ENCODE measurements at regions of chr5 and their contacts with region 1.

Region 1: DNA sequence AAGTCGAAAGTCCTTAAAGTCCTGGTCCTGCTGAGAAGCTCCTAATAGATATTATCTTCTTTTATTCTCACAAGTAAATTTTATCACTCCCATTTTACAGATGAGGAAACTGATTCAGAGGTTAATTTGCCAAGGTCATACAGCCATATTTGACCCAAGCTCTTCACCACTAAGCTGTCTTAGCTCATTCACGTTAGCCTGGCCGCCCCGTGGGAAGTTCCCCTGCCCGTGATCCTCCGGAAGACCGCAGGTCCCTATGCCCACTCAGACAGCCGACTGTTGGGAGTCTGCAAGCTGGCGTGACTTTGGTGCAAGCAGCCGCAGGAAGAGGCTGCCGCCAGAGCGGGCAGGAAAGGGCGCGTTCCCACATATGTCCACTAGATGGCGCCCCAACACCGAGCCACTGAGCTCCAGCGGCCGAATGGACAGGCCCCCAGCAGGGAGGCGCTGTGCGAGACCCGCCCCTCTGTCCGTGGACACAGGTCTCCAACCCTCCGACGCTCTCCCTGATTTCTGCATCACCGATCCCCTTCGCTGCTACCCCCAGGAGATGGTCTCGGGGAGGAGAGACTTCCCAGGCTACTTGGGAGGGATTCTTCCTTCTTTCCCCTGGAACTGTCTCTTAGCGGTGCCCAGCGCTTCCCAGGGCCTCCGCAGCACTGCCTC is 10.0 kb upstream of the ARAP3 start:
- DNase-seq: peak; percentile 86 to 91 (median 87)
- ATAC-seq: peak; percentile 98 to 100 (median 100)
- H3K4me3 ChIP-seq: peak overlapping the region; percentile 5 to 26 (median 25)
- H3K27ac ChIP-seq: no peak overlapping the region
- H3K4me1 ChIP-seq: peaks cover 0 to 8% (median 0%) of the 10 kb centered on the region in 4 donors
- H3K27me3 ChIP-seq: no peaks in the 10 kb centered on the region
- CTCF ChIP-seq: peak; percentile 98 to 100 (median 99)
- POLR2A ChIP-seq: no peak

Region 2: GRCh38 chr5:141623186-141623585 is 68.8 kb before region 1 on chr5:
- intact Hi-C with region 1: no loop called
- DNase-seq: no peak
- ATAC-seq: no peak
- H3K4me3 ChIP-seq: no peak overlapping the region
- H3K27ac ChIP-seq: no peak overlapping the region
- H3K4me1 ChIP-seq: peaks cover 0 to 11% (median 8%) of the 10 kb centered on the region in 4 donors
- H3K27me3 ChIP-seq: no peaks in the 10 kb centered on the region
- CTCF ChIP-seq: no peak
- POLR2A ChIP-seq: no peak

Region 3: GRCh38 chr5:141883184-141883891 is 191.3 kb after region 1 on chr5:
- intact Hi-C with region 1: loop called (anchors 5 kb)
- DNase-seq: no peak
- ATAC-seq: no peak
- H3K4me3 ChIP-seq: no peak overlapping the region
- H3K27ac ChIP-seq: no peak overlapping the region
- H3K4me1 ChIP-seq: peaks cover 0 to 4% (median 0%) of the 10 kb centered on the region in 4 donors
- H3K27me3 ChIP-seq: no peaks in the 10 kb centered on the region
- CTCF ChIP-seq: no peak
- POLR2A ChIP-seq: no peak

Region 4: DNA sequence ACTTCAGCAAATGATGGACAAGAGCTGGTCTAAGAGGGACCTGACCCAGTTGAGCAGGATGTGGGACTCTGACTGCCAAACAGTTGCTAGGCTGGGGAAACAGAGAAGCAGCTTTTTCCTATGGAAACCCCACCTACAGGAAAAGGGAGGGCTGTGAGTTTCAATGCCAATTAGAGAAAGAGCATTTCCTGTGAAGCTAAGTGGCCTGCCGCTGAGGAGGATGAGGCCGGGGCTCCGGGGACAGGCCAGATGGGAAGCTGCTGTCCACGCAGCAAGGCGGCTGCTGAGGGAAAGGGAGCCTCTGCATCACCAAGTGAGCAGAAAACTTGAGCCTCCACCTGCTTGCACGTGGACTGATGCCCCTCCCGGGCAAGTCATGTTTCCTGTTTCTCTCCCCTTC is 266.1 kb after region 1 on chr5 and contains the start of gene PCDH12:
- intact Hi-C with region 1: loop called (anchors 5 kb)
- DNase-seq: peak in 1 of 3 donors; percentile 54
- ATAC-seq: peak; percentile 52 to 67 (median 58)
- H3K4me3 ChIP-seq: peak within 1 kb of the TSS; percentile 4 to 33 (median 6)
- H3K27ac ChIP-seq: peak within 1 kb of the TSS in 1 of 3 donors; percentile 17
- H3K4me1 ChIP-seq: peaks cover 0 to 3% (median 0%) of the 10 kb centered on the region in 4 donors
- H3K27me3 ChIP-seq: no peaks in the 10 kb centered on the region
- CTCF ChIP-seq: no peak
- POLR2A ChIP-seq: no peak
- total RNA-seq, gene PCDH12: 1.5 to 4.4 (median 1.9) TPM

Measured in right lobe of liver (tissue), 6 donors.